Breast epithelium (tissue), 4 donors: ENCODE measurements at regions of chr17 and their contacts with region 1.

Region 1: DNA sequence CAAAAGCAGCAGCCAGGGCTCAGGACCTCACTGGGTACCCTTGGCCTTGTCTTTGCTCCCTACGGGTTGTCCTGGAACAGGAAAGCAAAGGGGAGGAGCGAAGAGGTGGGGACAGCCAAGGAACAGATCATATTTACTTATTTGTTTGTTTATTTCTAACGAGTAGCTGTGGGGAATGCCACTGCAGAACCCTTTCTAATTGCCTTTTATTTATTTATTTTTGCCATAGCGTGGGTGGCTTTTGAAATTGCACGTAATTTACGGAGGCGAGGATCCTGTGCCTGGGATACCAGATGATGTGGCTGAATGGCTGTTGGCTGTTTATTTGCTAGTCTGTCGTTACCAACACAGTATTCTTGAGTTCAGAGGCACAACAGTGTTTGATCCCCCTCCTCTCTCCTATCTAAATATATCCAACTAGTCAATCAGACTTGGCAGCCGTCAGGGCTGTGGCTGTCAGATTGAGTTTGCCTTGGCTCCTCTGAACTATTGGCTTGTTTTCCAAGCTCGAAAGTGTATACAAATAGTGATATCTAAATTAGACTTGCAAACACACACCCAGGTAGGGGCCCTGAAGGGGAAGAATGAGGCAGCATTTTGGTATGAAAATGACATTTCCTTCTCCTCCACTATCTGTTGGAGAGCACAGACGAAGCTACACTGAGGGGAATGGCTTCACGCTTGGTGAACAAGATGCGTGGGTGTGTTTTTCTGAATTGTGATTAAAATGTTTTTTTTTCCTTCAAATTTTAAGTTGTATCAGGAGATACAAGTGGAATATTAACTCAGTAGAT is 110.4 kb downstream of the MSI2 start:
- DNase-seq: no peak
- H3K4me3 ChIP-seq: no peak overlapping the region
- H3K27ac ChIP-seq: no peak overlapping the region
- H3K4me1 ChIP-seq: peaks cover 0 to 10% of the 10 kb centered on the region in 2 donors
- H3K27me3 ChIP-seq: no peaks in the 10 kb centered on the region
- CTCF ChIP-seq: no peak
- POLR2A ChIP-seq: no peak

Region 2: DNA sequence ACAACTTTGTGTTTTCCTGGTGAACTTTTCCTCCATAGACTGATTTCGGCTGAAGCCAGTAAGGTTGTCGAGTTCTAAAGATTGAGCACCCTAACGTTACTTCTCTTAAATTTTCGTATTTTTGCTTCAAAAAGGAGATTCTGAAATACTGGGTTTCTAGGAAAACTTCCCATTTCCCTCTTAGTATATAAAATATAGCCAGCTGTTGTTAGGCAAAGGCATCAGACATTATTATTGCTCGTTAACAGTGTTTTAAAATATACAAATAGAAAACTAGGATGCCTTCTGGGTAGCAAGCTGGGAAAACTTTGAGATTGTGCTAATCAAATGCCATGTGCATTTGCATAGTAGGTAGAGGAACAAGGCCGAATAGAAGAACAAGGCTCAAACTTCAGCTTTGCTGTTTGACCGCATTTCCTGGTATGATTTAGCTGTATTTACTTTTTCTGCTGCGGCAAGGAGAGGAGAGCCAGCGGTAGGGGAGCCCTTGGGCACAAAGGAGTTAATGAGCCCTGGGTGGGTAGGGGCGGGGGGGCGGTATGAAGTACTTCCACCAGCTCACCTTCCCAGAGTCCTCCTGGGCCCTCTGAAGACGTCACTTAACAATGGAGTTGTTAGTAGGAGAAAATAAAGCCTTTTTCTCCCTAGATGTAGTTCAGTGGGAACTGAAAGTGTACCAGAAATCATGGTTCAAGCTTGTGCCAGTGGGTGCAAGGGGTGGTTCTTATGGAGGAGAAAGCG is 41.5 kb after region 1 on chr17:
- intact Hi-C with region 1: no loop called
- DNase-seq: no peak
- H3K4me3 ChIP-seq: no peak overlapping the region
- H3K27ac ChIP-seq: peak overlapping the region; percentile 84 to 85
- H3K4me1 ChIP-seq: peaks cover 0 to 18% of the 10 kb centered on the region in 2 donors
- H3K27me3 ChIP-seq: no peaks in the 10 kb centered on the region
- CTCF ChIP-seq: no peak
- POLR2A ChIP-seq: no peak

Region 3: GRCh38 chr17:57892146-57892828 is 525.5 kb after region 1 on chr17:
- intact Hi-C with region 1: no loop called
- DNase-seq: peak; percentile 84 to 87
- H3K4me3 ChIP-seq: no peak overlapping the region
- H3K27ac ChIP-seq: peak overlapping the region; percentile 92 to 95
- H3K4me1 ChIP-seq: peaks cover 0 to 41% of the 10 kb centered on the region in 2 donors
- H3K27me3 ChIP-seq: no peaks in the 10 kb centered on the region
- CTCF ChIP-seq: peak; percentile 89 to 97 (median 94)
- POLR2A ChIP-seq: no peak

Region 4: GRCh38 chr17:58085039-58085728 is 718.4 kb after region 1 on chr17:
- intact Hi-C with region 1: loop called (anchors 5 kb)
- DNase-seq: no peak
- H3K4me3 ChIP-seq: peak overlapping the region; percentile 93 to 98 (median 97)
- H3K27ac ChIP-seq: peak overlapping the region; percentile 93 to 96
- H3K4me1 ChIP-seq: peaks cover 4 to 13% of the 10 kb centered on the region in 2 donors
- H3K27me3 ChIP-seq: no peaks in the 10 kb centered on the region
- CTCF ChIP-seq: no peak
- POLR2A ChIP-seq: no peak